RWPE1 (cell line): ENCODE measurements at regions of chr7 and their contacts with region 1.

Region 1: GRCh38 chr7:29126804-29127203 is 19.5 kb downstream of the CPVL start:
- DNase-seq: no peak
- H3K27ac ChIP-seq: no peak overlapping the region
- CTCF ChIP-seq: no peak

Region 2: GRCh38 chr7:29099891-29100847 is 26.6 kb before region 1 on chr7:
- CTCF ChIA-PET with region 1: no interaction called
- POLR2A ChIA-PET with region 1: no interaction called
- DNase-seq: no peak
- H3K27ac ChIP-seq: no peak overlapping the region
- CTCF ChIP-seq: no peak

Region 3: DNA sequence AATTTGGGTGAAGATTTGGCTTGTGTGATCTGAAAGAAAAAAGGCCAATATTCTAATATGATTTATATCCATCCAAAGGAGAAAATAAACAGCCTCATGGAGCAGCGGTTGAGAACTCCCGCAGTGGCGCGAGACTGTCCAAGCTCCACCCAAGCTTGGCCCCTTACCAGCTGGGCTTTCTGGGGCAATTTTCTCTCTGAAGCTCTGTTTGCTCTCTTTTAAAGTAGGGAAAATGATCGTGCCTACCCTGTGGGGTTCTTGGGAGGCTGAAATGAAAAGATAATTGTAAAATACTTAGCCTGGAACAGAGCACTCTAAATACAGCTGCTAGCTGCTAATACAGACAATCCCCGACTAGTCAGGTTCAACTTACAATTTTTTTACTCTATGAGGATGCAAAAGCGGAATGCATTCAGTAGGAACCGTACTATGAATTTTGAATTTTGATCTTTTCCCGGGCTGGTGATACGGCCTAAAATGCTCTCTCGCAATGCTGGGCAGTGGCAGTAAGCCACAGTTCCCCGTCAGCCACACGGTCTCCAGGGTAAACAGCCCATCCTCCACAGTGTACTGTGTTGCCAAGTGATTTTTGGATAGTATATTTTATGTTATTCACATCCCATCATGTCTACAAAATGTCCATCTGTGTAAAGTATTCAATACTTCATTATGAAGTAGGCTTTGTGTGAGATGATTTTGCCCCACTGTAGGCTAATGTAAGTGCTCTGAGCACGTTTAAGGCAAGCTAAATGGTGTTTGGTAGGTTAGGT is 205.4 kb after region 1 on chr7:
- CTCF ChIA-PET with region 1: no interaction called
- POLR2A ChIA-PET with region 1: interaction called, 12 read pairs
- DNase-seq: no peak
- H3K27ac ChIP-seq: no peak overlapping the region
- CTCF ChIP-seq: no peak